Activated CD4-positive, alpha-beta T cell treated with anti-CD3 and anti-CD28 coated beads, Interleukin-2, amount 10 ng/mL, durations not matched to agents 24 days and 14 days (primary cell): ENCODE measurements at regions of chr12 and their contacts with region 1.

Region 1: DNA sequence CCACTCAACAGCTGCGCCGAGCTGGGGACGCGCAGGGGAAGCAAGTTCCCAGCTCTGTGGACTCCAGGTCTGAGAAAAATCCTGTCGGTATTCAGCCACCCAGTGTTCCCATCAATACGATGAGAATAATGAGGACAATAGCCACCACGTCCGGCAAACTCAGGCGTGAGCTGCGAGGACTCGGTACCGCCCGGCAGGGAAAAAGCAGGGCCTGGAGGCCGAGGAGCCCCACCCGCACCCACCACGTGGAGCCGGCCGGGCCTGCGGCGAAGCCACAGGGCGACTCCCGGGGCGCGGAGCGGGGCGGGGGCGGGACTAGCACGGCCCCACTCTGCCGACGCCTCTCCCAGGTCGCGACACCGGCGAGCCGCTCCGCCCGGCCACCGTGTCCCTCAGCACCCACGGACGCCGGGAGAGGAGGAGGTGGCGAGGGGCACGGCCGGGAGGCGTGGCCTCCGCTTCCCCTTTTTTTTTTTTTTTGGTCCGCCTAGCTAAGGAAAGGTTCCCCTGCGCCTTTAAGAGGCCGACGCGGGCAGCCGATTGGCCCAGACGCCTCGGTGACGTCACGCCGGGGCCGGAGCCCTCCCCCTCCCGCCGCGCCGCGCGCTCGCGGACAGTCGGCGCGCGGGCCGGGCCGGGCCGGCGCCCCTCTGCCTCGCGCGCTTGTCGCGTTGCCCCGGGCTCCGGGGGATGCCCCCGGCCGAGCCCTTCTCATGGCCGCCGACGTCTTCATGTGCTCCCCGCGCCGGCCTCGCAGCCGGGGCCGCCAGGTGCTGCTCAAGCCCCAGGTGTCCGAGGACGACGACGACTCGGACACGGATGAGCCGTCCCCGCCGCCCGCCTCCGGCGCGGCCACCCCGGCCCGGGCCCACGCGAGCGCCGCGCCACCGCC is at the start of gene MLXIP:
- DNase-seq: peak; percentile 98
- H3K4me3 Mint-ChIP-seq: peak within 1 kb of the TSS; percentile 91
- H3K27ac Mint-ChIP-seq: peak within 1 kb of the TSS; percentile 88
- H3K4me1 Mint-ChIP-seq: peaks cover 41% of the 10 kb centered on the region
- H3K27me3 Mint-ChIP-seq: no peaks in the 10 kb centered on the region
- total RNA-seq, gene MLXIP: 47.6 and 48.0 TPM in 2 replicates

Region 2: GRCh38 chr12:121802846-121803630 is 275.3 kb before region 1 on chr12:
- intact Hi-C with region 1: loop called (anchors 10 kb)
- DNase-seq: peak; percentile 96
- H3K4me3 Mint-ChIP-seq: peak overlapping the region; percentile 100
- H3K27ac Mint-ChIP-seq: peak overlapping the region; percentile 100
- H3K4me1 Mint-ChIP-seq: peaks cover 34% of the 10 kb centered on the region
- H3K27me3 Mint-ChIP-seq: no peaks in the 10 kb centered on the region

Region 3: DNA sequence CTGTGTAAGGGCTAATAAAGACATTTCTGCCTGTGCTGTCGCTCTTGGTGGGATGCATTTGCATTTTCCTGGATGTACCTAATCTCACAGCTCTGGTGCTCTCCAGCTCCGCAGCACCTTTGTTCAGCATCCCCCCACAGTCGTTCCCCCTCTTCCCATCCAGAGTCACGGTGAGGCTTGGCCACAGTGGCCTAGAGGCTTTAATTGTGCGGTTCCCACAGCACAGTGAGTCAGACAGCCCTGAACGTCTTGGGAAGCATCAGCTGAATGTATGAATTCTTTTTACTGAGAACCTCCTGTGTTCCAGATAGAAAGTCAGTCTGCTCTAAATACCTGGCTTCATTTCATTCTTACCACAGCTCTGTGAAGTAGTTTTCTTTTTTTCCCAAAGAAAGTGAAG is 28.9 kb after region 1 on chr12:
- intact Hi-C with region 1: loop called (anchors 1 kb)
- DNase-seq: no peak
- H3K4me3 Mint-ChIP-seq: no peak overlapping the region
- H3K27ac Mint-ChIP-seq: no peak overlapping the region
- H3K4me1 Mint-ChIP-seq: peaks cover 46% of the 10 kb centered on the region
- H3K27me3 Mint-ChIP-seq: no peaks in the 10 kb centered on the region

Region 4: DNA sequence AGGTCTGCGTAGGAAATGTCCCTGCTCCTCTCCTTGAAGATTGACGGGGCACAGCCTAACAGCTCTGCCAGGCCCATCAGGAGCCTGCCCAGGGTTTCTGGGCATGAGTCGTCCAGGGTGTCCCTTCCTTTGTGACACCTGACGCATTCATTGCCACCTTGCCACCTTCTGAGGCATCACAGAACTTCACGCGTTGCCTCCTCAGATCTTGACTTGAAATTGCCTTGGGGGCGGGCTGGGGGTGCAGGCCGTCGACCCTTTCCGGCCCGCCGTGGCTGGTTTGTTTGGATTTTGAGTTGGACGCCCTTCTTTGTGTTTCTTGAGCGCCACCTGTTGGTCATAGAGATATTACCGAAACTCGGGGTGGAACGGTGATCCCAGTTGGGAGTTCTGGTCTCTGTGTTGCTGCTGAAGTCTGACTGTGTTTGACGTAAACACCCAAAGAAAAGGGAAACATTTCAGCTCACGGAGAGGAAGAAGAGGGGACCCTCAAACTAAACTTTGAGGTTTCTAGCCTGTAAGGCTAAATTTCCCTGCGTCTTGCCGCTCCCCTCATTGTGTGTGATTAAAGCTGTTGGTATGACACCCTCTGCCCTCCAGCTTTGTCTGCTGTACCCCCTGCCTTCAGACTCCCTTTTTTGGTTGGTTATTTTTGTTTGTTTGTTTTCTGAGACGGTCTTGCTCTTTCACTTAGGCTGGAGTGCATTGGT is 44.8 kb after region 1 on chr12:
- intact Hi-C with region 1: loop called (anchors 2 kb)
- DNase-seq: peak; percentile 92
- H3K4me3 Mint-ChIP-seq: no peak overlapping the region
- H3K27ac Mint-ChIP-seq: no peak overlapping the region
- H3K4me1 Mint-ChIP-seq: peaks cover 20% of the 10 kb centered on the region
- H3K27me3 Mint-ChIP-seq: no peaks in the 10 kb centered on the region

Region 5: DNA sequence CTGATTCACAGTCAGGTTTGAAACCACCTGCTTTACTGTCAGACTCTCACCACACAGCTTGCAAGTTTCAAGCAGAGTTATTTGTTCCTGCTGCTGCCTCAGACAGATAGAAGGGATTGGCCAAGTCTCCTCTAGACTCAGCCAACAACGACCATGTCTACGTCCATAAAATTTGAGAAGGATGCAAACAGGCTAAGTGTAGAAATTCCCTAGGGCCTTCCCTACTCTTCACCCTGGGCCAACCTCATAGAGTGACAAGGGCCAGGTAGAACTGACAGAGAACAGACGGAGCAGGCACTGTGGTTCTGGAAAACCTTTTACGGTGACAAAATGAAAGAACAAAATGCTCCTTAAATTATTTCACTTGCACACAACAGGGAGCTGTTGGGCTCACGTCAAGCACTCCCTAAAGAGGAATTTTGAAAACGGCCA is 304.5 kb after region 1 on chr12:
- intact Hi-C with region 1: no loop called
- DNase-seq: no peak
- H3K4me3 Mint-ChIP-seq: no peak overlapping the region
- H3K27ac Mint-ChIP-seq: no peak overlapping the region
- H3K4me1 Mint-ChIP-seq: peaks cover 8% of the 10 kb centered on the region
- H3K27me3 Mint-ChIP-seq: no peaks in the 10 kb centered on the region

Region 6: DNA sequence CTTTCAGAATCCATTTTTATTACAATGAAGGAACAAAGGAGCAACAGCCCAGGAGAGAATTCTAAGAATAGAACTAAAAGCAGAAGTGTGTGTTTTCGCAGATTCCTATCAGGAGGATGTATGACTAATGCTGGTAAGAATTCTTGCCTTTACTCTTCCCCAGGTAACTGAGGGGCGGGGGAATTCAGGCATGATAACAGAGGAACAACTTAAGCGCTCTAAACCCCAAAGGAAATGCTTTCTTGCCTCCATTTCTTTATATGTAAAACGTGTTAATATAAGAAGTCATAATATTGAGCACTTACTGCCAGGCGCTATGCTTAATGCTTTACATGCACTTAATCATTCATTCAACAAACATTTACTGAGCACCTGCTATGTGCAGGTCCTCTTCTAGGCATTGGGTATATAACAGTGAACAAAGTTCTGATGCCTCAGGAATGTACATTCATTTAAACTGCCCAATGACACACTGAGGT is 647.7 kb after region 1 on chr12:
- intact Hi-C with region 1: loop called (anchors 10 kb)
- DNase-seq: peak; percentile 78
- H3K4me3 Mint-ChIP-seq: peak overlapping the region; percentile 68
- H3K27ac Mint-ChIP-seq: peak overlapping the region; percentile 92
- H3K4me1 Mint-ChIP-seq: peaks cover 59% of the 10 kb centered on the region
- H3K27me3 Mint-ChIP-seq: no peaks in the 10 kb centered on the region

Region 7: DNA sequence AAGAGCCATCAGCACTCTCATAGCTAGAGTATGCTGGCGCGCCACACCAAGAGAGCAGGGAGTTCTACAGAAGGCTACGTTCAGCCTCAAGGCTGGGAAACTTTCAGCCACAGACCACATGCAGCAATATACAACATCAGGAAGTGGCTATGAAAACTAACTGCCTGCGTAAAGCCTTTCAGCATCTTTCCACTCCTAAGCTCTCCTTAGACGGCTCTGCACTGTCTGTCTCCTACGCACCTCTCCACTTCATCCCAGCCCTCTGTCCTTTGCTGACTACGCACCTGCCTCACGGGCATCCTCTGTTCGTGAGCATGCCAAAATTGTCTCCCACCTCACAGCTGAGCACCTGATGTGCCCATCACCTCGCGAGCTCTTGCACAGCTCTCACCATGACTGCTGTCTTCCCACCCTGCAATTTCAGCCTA is 1144.9 kb after region 1 on chr12:
- intact Hi-C with region 1: loop called (anchors 10 kb)
- DNase-seq: peak; percentile 91
- H3K4me3 Mint-ChIP-seq: peak overlapping the region; percentile 75
- H3K27ac Mint-ChIP-seq: peak overlapping the region; percentile 95
- H3K4me1 Mint-ChIP-seq: peaks cover 34% of the 10 kb centered on the region
- H3K27me3 Mint-ChIP-seq: no peaks in the 10 kb centered on the region